ENCODE measurements at regions of chr19 and their contacts with region 1.

Region 1: DNA sequence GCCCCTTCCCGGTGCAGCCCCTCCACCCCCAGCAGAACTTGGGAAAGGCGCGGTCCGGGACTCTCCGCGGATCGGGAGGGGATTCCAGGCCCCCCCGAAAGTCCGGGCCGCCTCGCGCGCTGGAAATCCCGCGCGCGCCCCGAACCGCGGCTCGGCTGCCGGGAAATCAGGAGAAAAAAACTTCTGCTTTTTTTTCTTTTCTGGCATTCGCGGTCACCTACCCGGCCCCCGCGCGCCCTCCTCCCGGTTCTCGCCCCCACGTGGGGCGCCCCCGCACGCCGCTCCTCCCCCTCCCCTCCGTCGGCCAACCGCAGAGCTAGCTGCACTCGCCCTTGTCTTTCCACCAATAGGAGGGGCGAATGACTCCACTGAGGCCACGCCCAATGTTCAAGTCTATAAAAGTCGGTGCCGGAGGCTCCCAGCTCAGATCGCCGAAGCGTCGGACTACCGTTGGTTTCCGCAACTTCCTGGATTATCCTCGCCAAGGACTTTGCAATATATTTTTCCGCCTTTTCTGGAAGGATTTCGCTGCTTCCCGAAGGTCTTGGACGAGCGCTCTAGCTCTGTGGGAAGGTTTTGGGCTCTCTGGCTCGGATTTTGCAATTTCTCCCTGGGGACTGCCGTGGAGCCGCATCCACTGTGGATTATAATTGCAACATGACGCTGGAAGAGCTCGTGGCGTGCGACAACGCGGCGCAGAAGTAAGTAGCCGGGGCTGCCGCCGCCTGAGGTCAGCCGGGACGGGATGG is at the start of gene GADD45B:
- DNase-seq: peak; percentile 96
- H3K4me3 Mint-ChIP-seq: peak within 1 kb of the TSS; percentile 89
- H3K27ac Mint-ChIP-seq: peak within 1 kb of the TSS; percentile 83
- H3K4me1 Mint-ChIP-seq: peaks cover 22% of the 10 kb centered on the region
- H3K27me3 Mint-ChIP-seq: peaks cover 3% of the 10 kb centered on the region
- total RNA-seq, gene GADD45B: 52.2 to 54.3 TPM

Region 2: GRCh38 chr19:2328401-2329148 is 147.3 kb before region 1 on chr19 and contains the starts of genes LSM7 and SPPL2B:
- CTCF ChIA-PET with region 1: no interaction called
- POLR2A ChIA-PET with region 1: interaction called, 10 read pairs
- DNase-seq: peak; percentile 93
- H3K4me3 Mint-ChIP-seq: peak within 1 kb of the TSS; percentile 98
- H3K27ac Mint-ChIP-seq: peak within 1 kb of the TSS; percentile 99
- H3K4me1 Mint-ChIP-seq: peaks cover 63% of the 10 kb centered on the region
- H3K27me3 Mint-ChIP-seq: no peaks in the 10 kb centered on the region
- total RNA-seq, gene LSM7: 110 to 115 TPM
- total RNA-seq, gene SPPL2B: 58.9 to 68.2 TPM

Region 3: GRCh38 chr19:2446271-2446779 is 29.6 kb before region 1 on chr19:
- CTCF ChIA-PET with region 1: no interaction called
- POLR2A ChIA-PET with region 1: no interaction called
- DNase-seq: no peak
- H3K4me3 Mint-ChIP-seq: no peak overlapping the region
- H3K27ac Mint-ChIP-seq: no peak overlapping the region
- H3K4me1 Mint-ChIP-seq: peaks cover 18% of the 10 kb centered on the region
- H3K27me3 Mint-ChIP-seq: no peaks in the 10 kb centered on the region

Region 4: DNA sequence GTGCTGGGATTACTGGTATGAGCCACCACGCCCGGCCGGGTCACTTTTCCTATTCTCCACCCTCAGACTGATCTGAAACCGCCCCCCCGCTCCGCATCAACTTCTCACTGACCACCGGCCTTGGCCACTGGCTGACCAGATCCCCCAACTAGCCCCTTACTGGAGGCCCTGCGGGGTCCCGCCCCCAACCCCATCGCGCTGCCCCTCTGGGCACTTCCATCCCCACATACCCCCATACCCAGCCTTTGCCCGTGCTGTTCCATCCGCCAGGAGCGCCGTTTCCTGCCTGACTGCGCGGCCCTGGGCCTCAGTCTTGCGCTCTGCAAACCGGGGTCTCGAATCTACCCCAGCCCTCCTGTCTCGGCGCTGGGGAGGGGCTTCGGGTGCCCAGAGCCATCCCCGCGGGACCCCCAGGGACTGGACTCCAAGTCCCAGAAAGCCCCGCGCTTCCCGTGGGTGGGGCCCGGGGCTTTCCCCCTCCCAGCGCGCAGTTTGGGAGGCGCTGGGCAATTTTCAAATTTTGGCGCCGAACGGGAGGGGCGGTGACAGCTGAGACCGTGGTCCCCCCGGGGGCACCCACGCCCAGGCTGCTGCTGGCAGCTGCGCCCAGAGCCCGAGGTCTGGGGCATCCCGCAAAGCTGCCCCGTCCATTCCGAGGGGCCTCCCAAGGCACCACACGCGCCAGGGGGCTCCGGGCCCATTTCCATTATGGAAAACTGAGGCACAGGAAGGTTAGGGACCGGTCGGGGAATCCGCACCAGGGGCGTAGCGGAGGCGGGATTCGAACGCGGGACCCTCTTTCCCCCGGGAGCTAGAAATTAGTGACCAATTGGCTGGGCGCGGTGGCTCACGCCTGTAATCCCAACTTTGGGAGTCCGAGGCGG is 13.9 kb before region 1 on chr19:
- CTCF ChIA-PET with region 1: interaction called, 7 read pairs
- POLR2A ChIA-PET with region 1: interaction called, 57 read pairs
- DNase-seq: peak; percentile 81
- H3K4me3 Mint-ChIP-seq: peak overlapping the region; percentile 95
- H3K27ac Mint-ChIP-seq: peak overlapping the region; percentile 86
- H3K4me1 Mint-ChIP-seq: peaks cover 23% of the 10 kb centered on the region
- H3K27me3 Mint-ChIP-seq: no peaks in the 10 kb centered on the region

Region 5: DNA sequence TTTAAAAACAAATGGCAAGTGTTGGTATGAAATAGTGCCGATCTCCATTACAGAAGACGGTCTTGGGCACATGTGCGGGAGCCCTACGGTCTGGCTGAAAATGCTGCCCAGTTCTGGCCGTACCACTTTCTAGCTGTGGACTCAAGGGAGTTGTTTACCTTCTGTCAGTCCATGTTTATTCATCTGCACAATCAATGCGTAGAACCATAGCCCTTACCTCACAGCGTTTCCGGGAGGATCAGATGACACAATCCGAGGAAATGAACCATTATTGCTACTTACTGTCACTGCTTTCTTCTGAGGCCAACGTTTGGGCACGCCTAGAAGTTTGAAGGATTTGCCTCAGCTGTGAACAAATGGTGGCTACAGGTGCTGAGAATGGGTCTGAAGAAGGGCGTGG is 31.2 kb after region 1 on chr19:
- CTCF ChIA-PET with region 1: interaction called, 7 read pairs
- POLR2A ChIA-PET with region 1: interaction called, 154 read pairs
- DNase-seq: peak; percentile 70
- H3K4me3 Mint-ChIP-seq: peak overlapping the region; percentile 41
- H3K27ac Mint-ChIP-seq: peak overlapping the region; percentile 86
- H3K4me1 Mint-ChIP-seq: peaks cover 37% of the 10 kb centered on the region
- H3K27me3 Mint-ChIP-seq: no peaks in the 10 kb centered on the region

Region 6: DNA sequence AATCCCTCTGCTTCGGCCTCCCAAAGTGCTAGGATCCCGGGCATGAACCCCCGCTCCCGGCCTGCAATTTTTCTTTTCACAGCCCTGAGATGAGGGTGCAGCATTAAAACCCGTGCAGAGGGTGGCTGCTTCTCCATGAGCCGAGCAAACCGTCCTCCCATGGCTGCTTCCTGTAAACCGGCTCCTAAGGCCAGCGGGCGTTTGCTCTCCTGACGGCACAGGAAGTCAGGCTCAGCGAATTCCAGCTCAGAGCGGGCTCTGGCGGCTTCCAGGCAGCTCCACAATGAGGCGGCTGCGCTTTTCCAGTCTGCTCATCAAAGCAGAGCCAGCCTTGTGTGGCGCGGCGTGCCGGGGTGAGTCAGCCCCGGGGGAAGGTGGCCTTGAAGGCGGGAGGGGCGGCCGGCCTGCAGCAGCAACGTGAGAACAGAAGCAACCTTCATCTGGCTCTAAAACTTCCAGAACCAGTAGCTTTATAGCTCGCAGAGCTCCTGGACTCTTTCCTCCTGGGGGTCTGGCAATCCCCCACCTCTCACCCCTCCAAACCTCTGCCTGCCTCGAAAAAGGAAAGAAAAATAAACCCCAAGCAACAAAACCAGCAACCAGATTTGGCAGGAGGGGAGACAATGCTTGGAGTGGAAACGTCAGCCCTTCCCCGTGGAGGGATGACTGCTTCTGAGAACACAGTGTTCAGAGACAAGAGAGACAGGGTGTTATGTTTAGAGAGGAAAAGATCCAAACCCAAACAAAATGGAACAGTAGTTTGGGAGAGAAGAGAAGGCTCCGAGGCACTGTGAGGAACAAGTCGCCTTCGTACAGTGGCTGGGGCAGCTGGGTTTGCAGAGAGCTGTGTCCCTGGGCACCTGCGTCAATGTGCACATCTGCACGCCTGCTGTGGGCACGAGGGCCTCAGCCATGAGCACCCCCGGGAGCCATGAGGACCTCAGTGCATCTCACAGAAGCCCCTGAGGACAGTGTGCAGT is 67.9 kb after region 1 on chr19:
- CTCF ChIA-PET with region 1: interaction called, 15 read pairs
- POLR2A ChIA-PET with region 1: interaction called, 58 read pairs
- DNase-seq: peak; percentile 75
- H3K4me3 Mint-ChIP-seq: peak overlapping the region; percentile 57
- H3K27ac Mint-ChIP-seq: peak overlapping the region; percentile 81
- H3K4me1 Mint-ChIP-seq: peaks cover 35% of the 10 kb centered on the region
- H3K27me3 Mint-ChIP-seq: no peaks in the 10 kb centered on the region

Region 7: GRCh38 chr19:2578901-2579677 is 103.2 kb after region 1 on chr19:
- CTCF ChIA-PET with region 1: interaction called, 30 read pairs
- POLR2A ChIA-PET with region 1: interaction called, 69 read pairs
- DNase-seq: peak; percentile 77
- H3K4me3 Mint-ChIP-seq: no peak overlapping the region
- H3K27ac Mint-ChIP-seq: no peak overlapping the region
- H3K4me1 Mint-ChIP-seq: peaks cover 3% of the 10 kb centered on the region
- H3K27me3 Mint-ChIP-seq: peaks cover 16% of the 10 kb centered on the region

Region 8: GRCh38 chr19:2618611-2619010 is 142.7 kb after region 1 on chr19:
- CTCF ChIA-PET with region 1: interaction called, 130 read pairs
- POLR2A ChIA-PET with region 1: interaction called, 220 read pairs
- DNase-seq: peak; percentile 74
- H3K4me3 Mint-ChIP-seq: peak overlapping the region; percentile 60
- H3K27ac Mint-ChIP-seq: peak overlapping the region; percentile 87
- H3K4me1 Mint-ChIP-seq: peaks cover 66% of the 10 kb centered on the region
- H3K27me3 Mint-ChIP-seq: no peaks in the 10 kb centered on the region

Measured in activated CD4-positive, alpha-beta memory T cell treated with anti-CD3 and anti-CD28 coated beads, Interleukin-2, amount 10 ng/mL, durations not matched to agents 7 days and 5 days (primary cell).